Tibial artery (tissue), 4 donors: ENCODE measurements at regions of chr1 and their contacts with region 1.

Region 1: GRCh38 chr1:7770997-7771822 is at the start of gene VAMP3:
- DNase-seq: peak; percentile 82 to 93
- H3K4me3 ChIP-seq: peak within 1 kb of the TSS; percentile 91 to 99
- H3K27ac ChIP-seq: peak within 1 kb of the TSS; percentile 84 to 95
- H3K4me1 ChIP-seq: peaks cover 0 to 25% (median 16%) of the 10 kb centered on the region in 4 donors
- H3K27me3 ChIP-seq: no peaks in the 10 kb centered on the region
- CTCF ChIP-seq: no peak

Region 2: GRCh38 chr1:7704214-7705047 is 66.8 kb before region 1 on chr1:
- intact Hi-C with region 1: loop called (anchors 5 kb)
- DNase-seq: peak; percentile 90 to 94
- H3K4me3 ChIP-seq: peak overlapping the region; percentile 46 to 56
- H3K27ac ChIP-seq: no peak overlapping the region
- H3K4me1 ChIP-seq: peaks cover 0 to 17% (median 13%) of the 10 kb centered on the region in 4 donors
- H3K27me3 ChIP-seq: peaks cover 0 to 29% of the 10 kb centered on the region in 2 donors
- CTCF ChIP-seq: no peak

Region 3: DNA sequence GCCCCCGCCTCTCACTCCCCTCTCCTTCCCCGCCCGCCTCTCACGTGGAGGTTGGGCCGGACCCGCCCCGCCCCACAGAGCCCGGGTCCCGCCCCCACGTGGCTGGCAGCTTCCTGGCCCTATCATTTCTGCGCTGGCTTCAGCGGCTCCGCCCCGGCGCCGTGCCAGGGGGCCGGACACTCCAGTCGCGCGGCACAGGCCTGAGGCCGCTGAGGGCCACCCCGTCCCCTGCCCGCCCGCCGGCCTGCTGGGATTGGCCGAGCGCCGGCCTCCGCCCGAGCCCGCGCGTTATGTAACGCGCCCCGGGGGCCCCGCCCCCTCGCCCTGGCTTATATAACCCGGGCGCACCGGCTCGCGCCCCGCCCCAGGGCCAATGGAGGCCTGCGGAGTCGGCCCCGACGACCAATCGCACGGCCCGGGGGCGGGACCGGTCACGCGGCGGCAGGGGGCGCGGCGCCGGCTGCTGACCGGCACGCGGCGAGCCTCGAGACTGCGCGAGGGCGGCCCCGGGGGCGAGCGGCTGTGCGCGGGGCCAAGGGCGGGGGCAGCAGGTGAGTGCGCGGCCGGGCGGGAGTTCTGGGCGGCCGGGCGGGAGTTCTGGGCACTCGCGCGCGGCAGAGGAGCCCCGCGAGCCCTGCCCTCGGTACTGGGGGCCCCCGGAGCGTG is 12.7 kb after region 1 on chr1 and contains the start of gene PER3:
- intact Hi-C with region 1: loop called (anchors 2 kb)
- DNase-seq: peak; percentile 96 to 99
- H3K4me3 ChIP-seq: peak within 1 kb of the TSS; percentile 79 to 88
- H3K27ac ChIP-seq: peak within 1 kb of the TSS; percentile 95 to 97
- H3K4me1 ChIP-seq: peaks cover 0 to 44% (median 24%) of the 10 kb centered on the region in 4 donors
- H3K27me3 ChIP-seq: no peaks in the 10 kb centered on the region
- CTCF ChIP-seq: no peak